ENCODE measurements at regions of chr16 and their contacts with region 1.

Region 1: DNA sequence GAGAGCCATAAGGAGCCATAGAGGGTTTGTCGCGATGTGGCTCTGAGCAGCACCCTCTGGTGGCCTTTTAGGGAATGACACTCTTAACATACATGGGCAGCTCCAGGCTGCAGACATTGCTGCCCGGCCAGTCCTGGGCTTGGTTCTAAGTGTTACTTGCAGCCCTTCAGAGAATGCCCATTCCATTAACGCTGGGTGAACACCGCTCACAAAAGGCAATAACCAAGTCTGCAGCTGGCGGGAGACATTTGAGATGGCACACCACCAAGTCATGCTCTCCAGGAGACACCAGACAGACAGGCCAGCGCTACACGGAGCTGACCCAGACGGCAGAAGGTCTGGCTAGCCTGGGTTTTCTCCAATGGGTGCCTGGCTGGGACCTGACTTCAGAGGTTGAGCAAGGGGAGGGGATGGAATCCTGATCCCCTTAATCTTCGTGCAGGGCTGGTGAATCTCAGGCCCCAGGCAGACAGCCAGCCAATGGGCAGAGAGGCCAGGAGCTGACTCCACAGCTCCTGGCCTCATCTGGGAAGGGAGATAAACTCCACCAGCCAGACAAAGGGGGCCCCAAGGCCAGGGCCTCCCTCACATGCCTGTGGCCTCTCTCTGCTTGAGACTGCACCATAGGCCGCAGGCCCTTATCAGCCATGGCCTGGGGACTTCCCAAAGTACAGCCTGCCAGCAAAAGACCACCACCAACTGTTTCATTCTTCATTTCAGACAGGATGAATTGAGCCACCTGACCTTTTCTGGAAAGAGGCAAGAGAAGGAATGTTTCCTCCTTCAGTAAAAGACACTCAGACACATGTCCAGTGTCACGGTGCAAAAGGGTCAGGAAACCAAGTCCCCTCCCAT is 58.8 kb downstream of the ZDHHC7 start:
- DNase-seq: peak; percentile 84
- ATAC-seq: peak; percentile 94
- H3K4me3 Mint-ChIP-seq: no peak overlapping the region
- H3K27ac Mint-ChIP-seq: no peak overlapping the region
- H3K4me1 Mint-ChIP-seq: no peaks in the 10 kb centered on the region
- H3K27me3 Mint-ChIP-seq: no peaks in the 10 kb centered on the region
- CTCF ChIP-seq: peak; percentile 84

Region 2: DNA sequence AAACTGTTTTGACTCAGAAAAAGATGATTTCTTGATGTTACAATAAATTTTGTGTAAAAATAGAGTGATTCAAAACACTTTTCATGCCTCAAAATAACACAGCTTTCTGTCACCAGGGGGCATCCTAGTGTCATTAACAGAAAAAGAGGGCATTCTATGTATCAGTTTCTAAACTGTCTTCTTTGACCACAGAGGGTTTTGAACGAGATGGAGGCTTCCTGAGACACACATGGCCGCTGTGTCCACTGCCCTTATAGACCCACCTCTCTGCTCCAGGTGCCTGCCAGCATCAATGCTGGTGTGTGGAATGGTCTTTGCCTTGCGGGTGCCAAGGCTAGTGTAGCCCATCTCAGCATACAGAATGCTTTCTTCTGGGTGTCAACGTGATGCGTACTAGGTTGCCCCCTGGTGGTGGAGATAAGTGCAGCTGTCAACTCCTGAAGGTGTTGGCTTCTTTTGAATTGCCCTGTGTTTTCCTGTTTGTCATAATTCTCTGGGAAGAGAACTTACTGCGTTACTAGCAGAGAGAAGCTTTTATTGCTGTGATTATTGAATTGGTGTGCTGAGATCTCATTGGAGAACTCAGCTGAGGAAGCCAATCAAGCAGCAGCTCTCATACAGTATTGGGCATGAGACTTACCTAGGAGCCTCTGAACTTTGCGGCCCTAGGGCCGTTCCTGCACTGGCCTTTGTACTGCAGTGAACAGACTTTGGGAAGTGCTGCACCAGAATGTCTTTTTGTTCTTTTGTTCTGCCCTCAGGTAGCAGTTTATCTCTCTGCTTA is 214.1 kb before region 1 on chr16:
- CTCF ChIA-PET with region 1: interaction called, 10 read pairs
- POLR2A ChIA-PET with region 1: no interaction called
- DNase-seq: peak; percentile 82
- ATAC-seq: peak; percentile 70
- H3K4me3 Mint-ChIP-seq: no peak overlapping the region
- H3K27ac Mint-ChIP-seq: 0 out of 2 replicates have a peak overlapping the region, but pooled peaks have one; percentile 89
- H3K4me1 Mint-ChIP-seq: peaks cover 88% of the 10 kb centered on the region
- H3K27me3 Mint-ChIP-seq: no peaks in the 10 kb centered on the region
- CTCF ChIP-seq: peak; percentile 97

Region 3: DNA sequence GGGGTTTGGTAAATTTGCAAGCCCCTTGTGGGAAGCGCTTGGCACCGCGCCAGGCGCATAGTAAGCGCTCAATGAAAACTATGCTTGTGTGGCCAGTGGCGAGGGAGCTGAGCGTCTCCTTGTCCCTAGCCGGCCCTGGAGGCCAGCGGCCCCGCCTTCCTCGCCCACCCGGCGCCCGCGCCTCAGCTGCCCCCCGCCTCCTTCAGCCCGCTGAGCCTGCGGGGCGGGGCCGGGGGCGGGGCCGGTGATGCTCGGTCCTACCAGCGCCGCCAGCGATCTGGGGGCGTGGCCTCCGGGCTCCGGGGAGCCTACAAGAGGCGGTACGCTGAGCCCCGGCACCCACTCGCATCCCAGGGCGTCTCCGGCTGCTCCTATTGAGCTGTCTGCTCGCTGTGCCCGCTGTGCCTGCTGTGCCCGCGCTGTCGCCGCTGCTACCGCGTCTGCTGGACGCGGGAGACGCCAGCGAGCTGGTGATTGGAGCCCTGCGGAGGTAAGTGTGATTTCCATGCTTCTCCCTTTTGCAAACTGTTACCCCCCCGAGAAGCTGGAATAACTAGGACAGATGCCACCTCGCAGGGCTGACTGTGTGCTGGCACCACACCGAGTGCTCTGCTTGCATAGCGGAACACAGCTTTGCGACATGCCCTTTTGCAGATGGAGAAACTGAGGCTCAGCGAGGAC is 132.8 kb before region 1 on chr16 and contains the start of gene CRISPLD2:
- CTCF ChIA-PET with region 1: interaction called, 15 read pairs
- POLR2A ChIA-PET with region 1: no interaction called
- DNase-seq: peak; percentile 97
- ATAC-seq: peak; percentile 93
- H3K4me3 Mint-ChIP-seq: peak within 1 kb of the TSS; percentile 80
- H3K27ac Mint-ChIP-seq: no peak within 1 kb of the TSS
- H3K4me1 Mint-ChIP-seq: peaks cover 14% of the 10 kb centered on the region
- H3K27me3 Mint-ChIP-seq: peaks cover 50% of the 10 kb centered on the region
- CTCF ChIP-seq: no peak
- total RNA-seq, gene CRISPLD2: 8.7 to 9.5 TPM (median 9.4 TPM) in 3 replicates

Region 4: DNA sequence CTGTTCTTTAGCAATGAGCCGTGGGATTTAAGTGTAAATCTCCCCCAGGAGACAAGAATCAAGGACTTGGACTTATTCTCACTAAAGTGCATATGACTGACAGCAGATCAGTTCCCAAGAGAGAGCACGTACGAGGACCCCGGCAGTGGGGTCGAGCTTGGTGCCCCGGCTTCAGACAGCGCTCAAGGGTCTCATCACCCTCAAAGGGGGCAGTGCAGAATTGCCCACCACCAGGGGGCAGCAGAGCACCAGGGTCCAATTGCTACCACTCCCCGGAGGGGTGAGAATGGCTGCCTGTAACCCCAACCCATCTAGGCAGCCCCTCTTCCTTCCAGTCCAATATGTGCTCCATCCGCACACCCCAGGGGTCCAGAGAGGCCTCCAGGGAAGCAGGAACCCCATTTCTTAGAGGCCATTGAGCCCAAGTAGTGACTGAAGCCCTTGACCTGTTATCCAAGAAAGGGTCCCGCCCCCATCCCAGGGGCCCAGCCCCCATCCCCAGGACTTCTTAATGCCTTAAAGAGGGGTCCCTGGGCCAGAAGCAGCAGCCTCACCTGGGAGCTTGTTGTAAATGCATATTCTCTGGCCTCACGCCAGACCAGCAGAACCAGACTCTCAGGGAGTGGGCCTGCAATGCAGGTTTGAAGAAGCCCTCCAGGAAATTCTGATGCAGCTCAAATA is 27.3 kb before region 1 on chr16:
- CTCF ChIA-PET with region 1: interaction called, 139 read pairs
- POLR2A ChIA-PET with region 1: no interaction called
- DNase-seq: peak; percentile 94
- ATAC-seq: peak; percentile 87
- H3K4me3 Mint-ChIP-seq: no peak overlapping the region
- H3K27ac Mint-ChIP-seq: 0 out of 2 replicates have a peak overlapping the region, but pooled peaks have one; percentile 70
- H3K4me1 Mint-ChIP-seq: peaks cover 14% of the 10 kb centered on the region
- H3K27me3 Mint-ChIP-seq: no peaks in the 10 kb centered on the region
- CTCF ChIP-seq: peak; percentile 96

Region 5: DNA sequence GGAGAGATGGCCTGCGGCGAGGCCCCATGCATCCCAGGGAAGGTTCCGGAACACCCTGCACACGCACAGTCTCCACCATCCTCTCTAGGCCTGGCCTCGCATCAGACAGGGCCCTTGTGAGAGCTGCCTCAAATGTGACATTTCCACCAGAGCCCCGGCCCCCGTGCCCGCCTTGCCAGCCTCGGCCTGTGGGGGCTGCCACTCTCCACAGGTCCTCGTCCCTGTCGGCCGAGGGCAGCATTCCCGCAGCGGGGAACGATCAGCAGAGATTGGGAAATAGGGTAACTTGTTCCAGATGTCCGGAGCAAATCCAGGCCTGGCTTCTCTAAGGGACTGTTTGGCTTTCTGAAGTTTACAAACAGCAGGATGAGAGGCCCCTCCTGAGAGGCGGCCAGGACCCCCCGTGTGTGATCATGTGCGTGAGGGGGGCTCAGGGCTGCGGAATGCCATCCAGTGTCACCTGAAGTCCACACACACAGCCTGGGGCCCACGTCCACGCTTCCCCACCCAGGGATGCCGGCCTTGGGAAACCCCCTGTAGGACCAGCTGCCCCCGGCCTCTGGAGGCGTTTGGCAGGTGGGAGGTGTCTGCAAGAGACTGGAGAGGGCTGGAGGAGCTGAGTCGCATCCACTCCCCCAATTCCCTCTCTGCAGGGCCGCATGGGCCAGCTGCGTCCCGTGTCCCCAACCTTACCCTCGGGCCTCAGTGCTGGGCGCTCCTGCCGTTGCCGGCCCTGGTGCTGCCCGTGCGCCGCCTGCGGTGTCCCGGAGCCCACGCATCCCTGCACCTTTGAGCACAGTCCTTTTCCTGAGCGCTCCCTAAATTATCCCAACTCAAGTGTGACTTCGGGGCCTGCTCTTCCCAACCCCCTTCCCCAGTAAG is 11.7 kb before region 1 on chr16:
- CTCF ChIA-PET with region 1: interaction called, 29 read pairs
- POLR2A ChIA-PET with region 1: no interaction called
- DNase-seq: no peak
- ATAC-seq: peak; percentile 26; the same call in 1 of the 2 replicates
- H3K4me3 Mint-ChIP-seq: no peak overlapping the region
- H3K27ac Mint-ChIP-seq: no peak overlapping the region
- H3K4me1 Mint-ChIP-seq: peaks cover 4% of the 10 kb centered on the region; the same call in 1 of the 2 replicates
- H3K27me3 Mint-ChIP-seq: no peaks in the 10 kb centered on the region
- CTCF ChIP-seq: no peak

Region 6: DNA sequence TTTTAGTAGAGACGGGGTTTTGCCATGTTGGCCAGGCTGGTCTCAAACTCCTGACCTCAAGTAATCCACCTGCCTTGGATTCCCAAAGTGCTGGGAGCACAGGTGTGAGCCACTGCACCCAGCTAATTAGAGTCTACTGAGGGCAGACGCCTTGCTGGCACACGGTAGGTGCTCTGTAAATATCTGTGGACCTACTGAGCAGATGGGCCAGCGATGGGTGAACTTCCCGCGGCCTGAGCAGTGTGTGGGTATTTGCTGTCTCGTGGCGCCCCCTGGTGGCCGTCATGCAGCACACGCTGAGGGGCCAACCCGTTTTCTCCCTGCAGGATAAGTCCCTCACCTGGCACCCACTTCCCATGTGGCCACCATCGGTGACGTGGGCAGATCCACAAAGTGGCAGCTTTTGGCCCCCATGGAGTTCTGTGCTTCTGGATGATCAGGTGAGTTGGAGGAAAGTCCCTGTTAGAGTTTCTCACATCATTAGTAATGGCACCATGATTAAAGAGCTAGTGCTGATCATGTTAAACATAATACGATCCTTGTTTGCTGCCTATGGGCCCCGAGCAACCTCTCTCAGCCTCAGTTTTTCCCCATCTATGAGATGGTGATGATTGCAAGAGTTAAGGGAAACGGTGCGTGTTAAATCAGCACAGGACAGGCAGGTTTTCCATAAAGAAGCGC is 18.0 kb after region 1 on chr16:
- CTCF ChIA-PET with region 1: interaction called, 29 read pairs
- POLR2A ChIA-PET with region 1: no interaction called
- DNase-seq: peak; percentile 88
- ATAC-seq: peak; percentile 96
- H3K4me3 Mint-ChIP-seq: no peak overlapping the region
- H3K27ac Mint-ChIP-seq: no peak overlapping the region
- H3K4me1 Mint-ChIP-seq: no peaks in the 10 kb centered on the region
- H3K27me3 Mint-ChIP-seq: no peaks in the 10 kb centered on the region
- CTCF ChIP-seq: peak; percentile 98

Region 7: GRCh38 chr16:85004559-85005205 is 52.1 kb after region 1 on chr16:
- CTCF ChIA-PET with region 1: no interaction called
- POLR2A ChIA-PET with region 1: no interaction called
- DNase-seq: no peak
- ATAC-seq: no peak
- H3K4me3 Mint-ChIP-seq: no peak overlapping the region
- H3K27ac Mint-ChIP-seq: peak overlapping the region; percentile 30; the same call in 1 of the 2 replicates
- H3K4me1 Mint-ChIP-seq: peaks cover 32% of the 10 kb centered on the region
- H3K27me3 Mint-ChIP-seq: no peaks in the 10 kb centered on the region
- CTCF ChIP-seq: no peak